ENCODE measurements at regions of chr1 and their contacts with region 1.

Region 1: DNA sequence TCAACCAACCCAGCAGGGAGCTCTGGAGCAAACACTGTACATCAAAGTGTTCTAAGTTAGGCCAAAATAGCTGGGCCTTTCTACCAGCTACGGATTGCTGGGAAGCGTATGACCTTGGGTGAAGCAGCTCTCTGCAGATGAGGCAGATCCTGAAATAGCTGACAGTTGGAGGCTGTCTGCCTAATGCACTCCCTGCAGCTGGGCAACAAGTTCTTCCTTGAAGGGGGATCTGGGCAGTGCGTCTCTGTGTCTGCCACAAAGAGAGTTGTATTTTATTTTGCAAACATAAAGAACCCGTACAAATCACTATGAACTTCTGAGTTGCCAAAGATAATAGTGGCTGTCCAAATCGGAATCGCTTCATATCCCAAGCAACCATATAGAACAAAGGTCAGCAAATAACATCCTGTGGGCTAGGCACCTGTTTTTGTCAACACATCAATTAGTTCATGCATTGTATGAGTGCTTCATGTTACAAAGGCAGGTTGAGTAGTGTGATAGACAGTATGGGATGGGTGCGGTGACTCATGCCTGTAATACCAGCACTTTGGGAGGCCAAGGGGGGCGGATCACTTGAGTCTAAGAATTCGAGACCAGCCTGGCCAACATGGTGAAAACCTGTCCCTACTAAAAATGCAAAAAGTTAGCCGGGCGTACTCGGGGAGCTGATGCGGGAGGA is 29.1 kb upstream of the KLF17 start:
- DNase-seq: no peak
- H3K4me3 ChIP-seq: no peak overlapping the region
- H3K27ac ChIP-seq: no peak overlapping the region
- H3K4me1 ChIP-seq: peaks cover 8 to 19% (median 13%) of the 10 kb centered on the region in 4 experiments
- H3K27me3 ChIP-seq: peaks cover 0 to 2% (median 0%) of the 10 kb centered on the region in 4 experiments; a peak in 1 of 7 replicates
- CTCF ChIP-seq: no peak
- EP300 ChIP-seq: no peak
- POLR2A ChIP-seq: no peak
- RAD21 ChIP-seq: no peak

Region 2: DNA sequence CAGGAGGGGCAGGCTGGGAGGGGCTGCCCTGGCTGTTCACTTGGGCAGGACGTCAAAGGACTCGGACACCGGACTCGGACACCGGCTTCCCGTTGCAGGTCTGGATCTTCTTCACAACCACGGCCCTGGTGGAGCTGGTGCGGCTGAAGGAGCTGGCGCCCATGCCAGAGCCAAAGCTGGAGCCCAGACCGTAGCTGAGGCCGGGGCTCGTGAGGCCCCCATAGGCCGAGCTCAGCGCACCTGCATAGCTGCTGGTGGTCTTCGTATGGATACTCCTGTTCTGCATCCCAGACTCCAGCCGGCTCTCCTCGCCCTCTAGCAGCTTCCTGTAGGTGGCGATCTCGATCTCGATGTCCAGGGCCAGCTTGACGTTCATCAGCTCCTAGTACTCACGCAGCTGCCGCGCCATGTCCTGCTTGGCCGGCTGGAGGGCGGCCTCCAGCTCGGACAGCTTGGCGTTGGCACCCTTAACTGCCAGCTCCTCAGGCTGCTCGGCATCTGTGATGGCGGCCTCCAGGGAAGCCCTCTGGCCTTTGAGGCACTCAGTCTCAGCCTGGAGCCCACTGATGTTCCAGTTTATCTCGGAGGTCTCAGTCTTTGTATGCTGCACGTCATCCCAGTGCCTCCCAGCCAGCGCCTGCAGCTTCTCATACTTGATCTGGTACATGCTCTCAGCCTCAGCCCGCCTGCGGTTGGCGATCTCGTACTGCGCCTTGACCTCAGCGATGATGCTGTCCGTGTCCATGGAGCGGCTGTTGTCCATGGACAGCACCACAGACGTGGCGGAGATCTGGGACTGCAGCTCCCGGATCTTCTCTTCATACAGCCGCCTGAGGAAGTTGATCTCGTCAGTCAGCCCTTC is 14.0 kb after region 1 on chr1:
- CTCF ChIA-PET with region 1: interaction called, 41 read pairs
- POLR2A ChIA-PET with region 1: no interaction called
- DNase-seq: peak in 1 of 2 experiments; percentile 80
- H3K4me3 ChIP-seq: no peak overlapping the region
- H3K27ac ChIP-seq: no peak overlapping the region
- H3K4me1 ChIP-seq: no peaks in the 10 kb centered on the region
- H3K27me3 ChIP-seq: peaks cover 0 to 2% (median 0%) of the 10 kb centered on the region in 4 experiments; a peak in 1 of 7 replicates
- CTCF ChIP-seq: peak; percentile 53 to 63 (median 54)
- EP300 ChIP-seq: no peak
- POLR2A ChIP-seq: no peak
- RAD21 ChIP-seq: peak; percentile 44 to 61

Region 3: DNA sequence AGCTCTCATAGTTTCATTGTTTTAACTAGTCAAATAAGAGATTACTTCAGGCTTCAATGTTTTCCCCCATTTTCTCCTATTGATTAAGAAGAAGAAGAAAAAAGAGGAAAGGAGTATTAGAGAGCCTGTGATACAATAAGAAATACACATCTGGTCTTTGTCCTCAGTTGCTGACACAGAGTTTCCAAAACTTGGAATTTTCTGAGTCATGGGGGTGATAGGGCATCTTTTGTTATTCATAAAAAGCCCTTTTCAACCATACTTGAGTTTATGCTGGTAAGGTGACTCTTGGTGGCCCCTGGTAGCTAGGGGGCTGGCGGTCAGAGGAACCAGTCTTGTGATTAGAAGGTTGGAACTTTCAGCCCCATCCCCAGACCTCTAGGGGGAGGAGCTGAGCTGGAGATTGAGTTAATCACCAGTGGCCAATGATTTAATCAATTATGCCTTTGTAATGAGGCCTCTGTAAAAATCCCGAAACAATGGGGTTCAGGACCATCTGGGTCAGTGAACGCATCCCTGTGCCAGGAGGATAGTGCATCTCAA is 80.8 kb after region 1 on chr1:
- CTCF ChIA-PET with region 1: interaction called, 12 read pairs
- POLR2A ChIA-PET with region 1: no interaction called
- DNase-seq: no peak
- H3K4me3 ChIP-seq: no peak overlapping the region
- H3K27ac ChIP-seq: no peak overlapping the region
- H3K4me1 ChIP-seq: no peaks in the 10 kb centered on the region; a peak in 1 of 7 replicates
- H3K27me3 ChIP-seq: no peaks in the 10 kb centered on the region
- CTCF ChIP-seq: peak in 2 of 3 experiments; percentile 13 to 26; a peak in 2 of 4 replicates
- EP300 ChIP-seq: no peak
- POLR2A ChIP-seq: no peak
- RAD21 ChIP-seq: peak; percentile 14 to 40; a peak in 3 of 4 replicates

Measured in H1 (cell line).